Right lobe of liver (tissue), 6 donors: ENCODE measurements at regions of chr16 and their contacts with region 1.

Region 1: GRCh38 chr16:78122774-78123315 is 23.4 kb downstream of the WWOX start:
- DNase-seq: no peak
- ATAC-seq: peak; percentile 80 to 90 (median 84)
- H3K4me3 ChIP-seq: no peak overlapping the region
- H3K27ac ChIP-seq: no peak overlapping the region
- H3K4me1 ChIP-seq: peaks cover 0 to 18% (median 4%) of the 10 kb centered on the region in 4 donors
- H3K27me3 ChIP-seq: no peaks in the 10 kb centered on the region
- CTCF ChIP-seq: peak; percentile 48 to 64 (median 58)
- POLR2A ChIP-seq: no peak

Region 2: DNA sequence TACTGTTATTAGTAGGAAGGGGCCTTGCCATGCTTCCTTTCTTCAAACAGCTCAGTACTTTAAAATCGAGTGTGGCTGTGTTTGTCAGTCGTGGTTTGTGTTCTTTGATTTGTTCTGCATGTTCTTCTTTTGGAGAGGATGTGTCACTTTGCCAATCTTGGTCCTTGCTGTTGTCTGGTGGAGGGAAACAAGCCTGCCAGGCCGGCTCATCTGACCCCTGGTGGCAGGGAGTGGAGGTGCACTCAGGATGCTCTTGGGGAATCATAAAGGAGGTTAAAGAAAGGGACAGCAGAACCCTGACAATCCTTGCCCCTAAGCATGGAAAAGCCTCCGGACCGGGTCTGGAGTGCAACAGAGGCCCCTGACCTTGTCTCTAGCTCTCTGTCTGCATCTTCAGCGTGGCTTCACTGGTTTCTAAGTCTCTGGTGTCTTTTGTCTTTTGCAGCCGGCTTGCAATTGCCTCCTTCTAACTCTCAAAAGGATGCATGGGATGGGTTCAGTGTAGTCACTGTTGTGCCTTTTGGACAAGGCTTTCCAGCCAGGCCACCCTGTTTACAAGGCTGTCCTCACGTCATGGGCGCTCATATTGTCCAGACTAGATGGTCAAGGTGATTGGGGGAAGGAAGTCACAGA is 112.4 kb after region 1 on chr16:
- intact Hi-C with region 1: loop called (anchors 10 kb)
- DNase-seq: peak; percentile 63 to 80 (median 79)
- ATAC-seq: peak; percentile 95 to 99 (median 98)
- H3K4me3 ChIP-seq: no peak overlapping the region
- H3K27ac ChIP-seq: no peak overlapping the region
- H3K4me1 ChIP-seq: peaks cover 0 to 7% (median under 1%) of the 10 kb centered on the region in 4 donors
- H3K27me3 ChIP-seq: no peaks in the 10 kb centered on the region
- CTCF ChIP-seq: peak; percentile 90 to 97 (median 91)
- POLR2A ChIP-seq: no peak

Region 3: DNA sequence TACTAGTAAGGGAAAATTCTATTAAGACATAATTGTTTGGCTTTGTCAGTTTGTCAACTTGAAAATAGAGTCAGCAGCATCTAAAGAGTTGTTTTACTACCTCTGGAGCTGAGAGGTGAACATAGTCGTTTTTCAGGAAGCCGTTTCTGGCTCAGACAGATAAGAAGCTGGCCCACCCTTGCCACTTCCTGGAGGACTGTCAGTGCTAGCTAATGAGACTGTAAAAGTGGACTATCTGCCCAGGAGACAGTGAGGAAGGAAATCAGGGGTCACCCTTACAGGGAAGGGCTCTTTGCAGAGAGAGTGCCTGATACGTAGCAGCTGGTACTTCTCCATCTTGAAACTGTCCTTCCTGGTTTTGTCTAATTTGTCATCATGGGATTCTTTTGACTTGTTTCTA is 305.3 kb after region 1 on chr16:
- intact Hi-C with region 1: no loop called
- DNase-seq: no peak
- ATAC-seq: no peak
- H3K4me3 ChIP-seq: no peak overlapping the region
- H3K27ac ChIP-seq: no peak overlapping the region
- H3K4me1 ChIP-seq: no peaks in the 10 kb centered on the region
- H3K27me3 ChIP-seq: no peaks in the 10 kb centered on the region
- CTCF ChIP-seq: no peak
- POLR2A ChIP-seq: no peak